ENCODE measurements at regions of chr4 and their contacts with region 1.

Region 1: DNA sequence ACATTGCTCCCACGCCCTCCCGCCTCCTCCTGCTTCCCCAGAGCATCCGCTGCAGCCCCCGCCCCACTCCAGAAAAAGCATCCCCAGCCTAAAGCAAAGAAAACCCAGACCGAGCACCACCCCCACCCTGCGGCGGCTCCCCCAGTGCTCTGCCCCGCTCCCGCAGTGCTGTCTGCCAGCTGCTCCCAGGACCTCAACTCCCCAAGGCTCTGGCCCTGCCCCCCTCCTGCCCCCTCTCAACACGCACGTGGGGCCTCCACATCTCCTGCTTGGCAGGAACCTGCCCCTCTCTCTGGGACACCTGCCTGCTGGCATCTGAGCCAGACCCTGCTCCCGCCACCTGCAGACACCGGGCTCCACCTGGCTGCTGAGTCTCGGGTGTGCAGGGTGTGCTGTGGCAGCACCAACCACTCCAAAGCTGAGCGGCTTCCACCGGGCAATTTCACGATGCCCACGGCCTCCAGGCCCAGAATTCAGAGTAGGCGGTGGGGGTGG is 79.4 kb downstream of the FAM53A start:
- DNase-seq: peak; percentile 22
- H3K27ac ChIP-seq: no peak overlapping the region
- CTCF ChIP-seq: no peak

Region 2: DNA sequence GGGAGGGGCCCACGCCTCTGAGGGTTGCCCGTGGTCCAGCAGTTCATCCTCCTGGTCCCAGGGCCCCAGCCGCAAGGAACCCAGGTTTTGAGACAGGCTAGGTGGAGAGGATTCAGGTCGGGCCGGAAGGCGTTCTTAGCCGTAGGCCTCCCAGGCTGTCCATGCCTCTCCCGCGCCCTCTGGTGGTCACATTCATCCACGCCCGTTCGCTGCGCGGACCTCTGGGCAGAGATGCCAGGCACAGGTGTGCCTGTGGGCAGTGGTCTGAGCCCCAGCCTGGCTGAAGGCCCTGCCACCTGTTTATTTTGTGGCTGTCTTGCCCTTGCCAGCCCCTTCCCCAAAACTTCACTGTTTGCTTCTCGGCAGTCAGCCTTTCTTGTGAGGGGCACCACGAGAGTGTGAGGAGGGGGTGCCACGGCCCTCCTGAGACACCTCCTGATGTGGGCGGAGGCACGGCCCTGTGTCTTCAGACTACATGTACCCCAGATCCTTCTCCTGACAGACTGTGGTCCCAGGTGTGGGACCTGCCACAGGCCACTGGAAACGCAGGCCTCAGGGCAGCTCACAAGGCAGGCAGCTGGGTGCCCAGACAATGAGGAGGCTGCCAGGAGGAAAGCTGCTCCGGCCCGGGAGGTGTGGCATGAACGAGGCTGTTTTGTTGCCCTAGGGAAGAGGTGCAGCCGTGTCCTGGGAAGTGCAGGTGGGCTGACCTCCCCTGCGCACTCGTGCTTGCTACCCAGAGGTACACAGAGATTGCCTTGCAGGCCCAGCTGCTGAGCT is 252.7 kb before region 1 on chr4:
- CTCF ChIA-PET with region 1: interaction called, 11 read pairs
- POLR2A ChIA-PET with region 1: no interaction called
- DNase-seq: peak; percentile 42
- H3K27ac ChIP-seq: peak overlapping the region; percentile 59
- CTCF ChIP-seq: peak; percentile 92